ENCODE measurements at regions of chr22 and their contacts with region 1.

Region 1: DNA sequence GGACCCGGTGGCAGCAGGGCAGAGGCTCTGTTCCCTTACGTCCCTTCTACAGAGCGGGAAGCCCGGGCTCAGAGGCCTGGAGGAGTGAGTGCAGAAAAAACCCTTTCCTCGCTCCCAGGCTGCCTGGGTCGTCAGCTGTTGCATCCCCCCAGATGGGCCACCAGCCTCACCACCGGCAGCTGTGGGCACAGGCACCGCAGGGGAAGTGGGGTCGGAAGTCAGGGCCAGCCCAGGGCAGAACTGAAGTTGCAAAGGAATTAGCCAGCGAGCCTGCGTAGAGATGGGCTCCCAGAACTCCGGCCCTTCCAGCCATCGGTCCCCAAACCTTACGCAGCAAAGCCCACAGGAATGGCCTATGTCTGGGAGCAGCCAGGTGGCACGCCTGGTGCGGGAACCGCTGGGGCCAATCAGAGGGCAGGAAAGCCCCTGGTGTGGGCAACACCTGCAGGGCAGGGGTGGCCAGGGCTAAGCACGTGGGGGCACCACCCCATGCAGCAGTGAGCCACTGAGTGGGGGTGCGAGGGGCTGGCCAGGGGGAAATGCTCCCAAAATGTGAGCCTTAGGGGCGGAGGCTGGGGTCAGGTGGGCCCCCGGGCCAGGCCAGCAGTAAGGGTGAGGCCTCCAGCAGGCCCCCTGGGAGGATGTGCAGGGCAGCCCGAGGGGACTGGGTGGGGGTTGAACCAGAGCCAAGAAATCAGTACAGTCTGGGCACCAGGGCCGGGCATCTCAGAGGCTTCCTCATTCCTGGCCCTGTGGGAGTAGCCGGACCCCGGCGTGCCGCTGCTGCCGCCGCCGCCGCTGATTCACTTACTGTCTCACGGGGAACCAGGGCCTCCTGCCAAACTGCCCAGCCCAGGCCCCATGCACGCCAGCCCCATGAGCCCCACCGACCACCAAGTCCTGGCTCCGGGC is 58.2 kb downstream of the WNT7B start:
- DNase-seq: no peak

Region 2: DNA sequence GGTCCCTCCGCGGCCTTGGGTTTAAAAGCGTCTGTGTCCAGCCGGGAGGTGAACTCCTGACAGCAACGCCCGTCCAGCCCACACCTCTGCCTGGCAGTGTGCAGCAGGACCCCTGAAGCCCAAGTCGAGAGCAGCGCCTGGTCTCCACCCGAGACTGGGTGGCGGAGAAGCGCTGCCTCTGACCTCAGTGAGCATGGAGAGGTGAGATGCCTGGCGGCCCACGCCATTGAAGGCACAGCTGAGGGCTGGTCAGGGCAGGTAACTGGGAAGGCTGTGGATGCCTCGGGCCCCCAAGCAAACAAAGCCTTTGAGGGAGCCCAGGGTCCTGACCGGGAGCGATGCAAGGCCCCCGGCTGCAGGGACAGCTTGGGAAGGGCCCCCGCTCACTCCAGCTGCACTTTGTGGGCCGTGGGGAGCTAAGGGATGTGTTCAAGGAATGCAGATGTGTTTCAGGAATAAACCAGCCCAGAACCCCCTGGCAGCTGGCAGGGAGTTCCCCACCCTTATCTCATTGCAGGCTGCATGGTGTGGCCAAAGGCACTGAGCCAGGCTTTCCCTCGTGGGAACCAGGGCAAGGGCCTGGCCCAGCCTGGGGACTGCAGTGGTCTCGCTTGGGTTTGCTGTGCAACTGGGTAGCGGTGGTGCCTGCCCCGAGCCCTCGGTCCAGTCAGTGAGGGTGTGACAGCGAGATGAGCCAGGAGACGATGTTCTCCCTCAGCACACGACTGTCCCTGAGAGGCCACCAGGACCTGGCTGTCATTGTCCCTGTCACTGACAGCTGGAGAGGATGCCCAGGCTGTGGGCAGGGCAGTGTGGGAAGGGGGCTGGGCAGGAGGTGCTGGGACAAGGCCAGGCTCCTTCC is 34.3 kb before region 1 on chr22:
- intact Hi-C with region 1: loop called in 1 of 2 experiments (anchors 1 kb)
- DNase-seq: peak; percentile 71

Measured in posterior vena cava (tissue), 2 donors.